Right ventricle myocardium inferior (tissue), 1 donor: ENCODE measurements at regions of chr16 and their contacts with region 1.

Region 1: DNA sequence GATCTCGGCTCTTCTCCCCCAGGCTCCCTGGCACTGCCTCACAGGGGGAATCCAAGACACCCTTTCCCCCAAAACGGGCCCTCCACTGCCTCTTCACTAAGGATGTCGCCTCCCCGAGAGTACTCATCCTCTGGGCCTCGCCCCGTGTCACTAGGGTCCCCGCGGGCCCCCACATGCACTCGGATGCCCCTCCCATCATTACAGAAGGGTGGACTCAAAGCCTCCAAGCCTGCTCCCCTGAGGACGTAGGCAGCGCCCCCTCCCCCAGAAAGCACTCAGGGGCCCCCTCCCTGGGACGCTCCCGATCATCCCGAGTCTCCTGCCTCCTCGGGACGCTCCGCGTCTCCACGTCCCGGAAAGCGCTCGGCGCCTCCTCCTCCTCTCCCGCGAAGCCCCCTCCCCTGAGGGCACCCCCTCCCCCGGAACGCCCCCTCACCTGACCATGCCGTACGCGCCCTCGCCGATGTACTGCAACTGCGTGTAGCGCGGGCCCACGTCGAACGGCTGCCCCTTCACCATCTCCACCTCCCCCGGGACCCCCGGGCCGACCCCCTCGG is 338 bp downstream of the MAPK3 start:
- DNase-seq: no peak
- ATAC-seq: peak; percentile 4

Region 2: GRCh38 chr16:30065143-30065850 is 57.4 kb before region 1 on chr16 and contains the start of gene ALDOA:
- intact Hi-C with region 1: loop called (anchors 2 kb)
- DNase-seq: peak; percentile 99
- ATAC-seq: peak; percentile 91
- total RNA-seq, gene ALDOA: 4,126 TPM

Region 3: GRCh38 chr16:30104494-30104968 is 18.2 kb before region 1 on chr16:
- intact Hi-C with region 1: no loop called
- DNase-seq: no peak
- ATAC-seq: no peak

Region 4: GRCh38 chr16:30163538-30163937 is 40.9 kb after region 1 on chr16:
- intact Hi-C with region 1: loop called (anchors 5 kb)
- DNase-seq: no peak
- ATAC-seq: no peak